PC-9 (cell line): ENCODE measurements at regions of chr1 and their contacts with region 1.

Region 1: GRCh38 chr1:163071405-163072255 is 2.5 kb downstream of the RGS4 start:
- DNase-seq: peak; percentile 35 to 60
- H3K4me3 ChIP-seq: no peak overlapping the region
- H3K27ac ChIP-seq: no peak overlapping the region
- H3K4me1 ChIP-seq: no peaks in the 10 kb centered on the region
- H3K27me3 ChIP-seq: no peaks in the 10 kb centered on the region
- CTCF ChIP-seq: peak; percentile 74

Region 2: GRCh38 chr1:162847839-162848453 is 223.7 kb before region 1 on chr1:
- CTCF ChIA-PET with region 1: no interaction called
- POLR2A ChIA-PET with region 1: no interaction called
- intact Hi-C with region 1: loop called (anchors 5 kb)
- DNase-seq: peak; percentile 45 to 63
- H3K4me3 ChIP-seq: no peak overlapping the region
- H3K27ac ChIP-seq: no peak overlapping the region
- H3K4me1 ChIP-seq: no peaks in the 10 kb centered on the region
- H3K27me3 ChIP-seq: no peaks in the 10 kb centered on the region
- CTCF ChIP-seq: peak; percentile 96

Region 3: DNA sequence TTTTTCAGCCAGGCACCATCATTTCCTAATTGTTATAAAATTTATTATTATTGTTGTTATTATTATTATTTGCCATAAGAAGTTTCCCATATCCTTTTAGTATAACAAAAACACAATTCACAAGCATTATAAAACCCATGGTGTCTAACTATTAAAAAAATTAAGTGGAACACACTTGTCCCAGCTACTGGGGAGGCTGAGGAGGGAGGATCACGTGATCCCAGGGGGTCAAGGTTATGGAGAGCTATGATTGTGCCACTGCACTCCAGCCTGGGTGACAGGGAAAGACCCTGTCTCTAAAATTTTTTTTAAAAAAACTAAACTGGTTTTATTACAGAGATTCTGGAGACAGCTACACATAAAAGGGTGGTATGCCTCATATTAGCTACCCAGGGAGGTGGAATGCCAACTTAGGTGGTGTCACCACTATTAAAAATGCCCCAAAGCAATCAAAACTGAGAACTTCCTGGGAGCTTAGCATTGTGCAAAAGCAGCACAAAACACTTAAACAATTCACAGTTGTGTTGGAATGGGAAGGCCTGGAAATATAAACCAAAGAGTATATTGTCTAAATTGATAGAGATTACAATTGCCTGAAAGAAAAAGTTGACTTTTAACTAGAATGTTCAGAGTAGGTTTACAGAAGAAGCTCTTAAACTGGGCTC is 11.2 kb before region 1 on chr1:
- CTCF ChIA-PET with region 1: interaction called, 10 read pairs
- POLR2A ChIA-PET with region 1: no interaction called
- intact Hi-C with region 1: no loop called
- DNase-seq: no peak
- H3K4me3 ChIP-seq: no peak overlapping the region
- H3K27ac ChIP-seq: no peak overlapping the region
- H3K4me1 ChIP-seq: 0 out of 2 replicates have a peak, but pooled peaks cover 6% of the 10 kb centered on the region
- H3K27me3 ChIP-seq: no peaks in the 10 kb centered on the region
- CTCF ChIP-seq: no peak

Region 4: DNA sequence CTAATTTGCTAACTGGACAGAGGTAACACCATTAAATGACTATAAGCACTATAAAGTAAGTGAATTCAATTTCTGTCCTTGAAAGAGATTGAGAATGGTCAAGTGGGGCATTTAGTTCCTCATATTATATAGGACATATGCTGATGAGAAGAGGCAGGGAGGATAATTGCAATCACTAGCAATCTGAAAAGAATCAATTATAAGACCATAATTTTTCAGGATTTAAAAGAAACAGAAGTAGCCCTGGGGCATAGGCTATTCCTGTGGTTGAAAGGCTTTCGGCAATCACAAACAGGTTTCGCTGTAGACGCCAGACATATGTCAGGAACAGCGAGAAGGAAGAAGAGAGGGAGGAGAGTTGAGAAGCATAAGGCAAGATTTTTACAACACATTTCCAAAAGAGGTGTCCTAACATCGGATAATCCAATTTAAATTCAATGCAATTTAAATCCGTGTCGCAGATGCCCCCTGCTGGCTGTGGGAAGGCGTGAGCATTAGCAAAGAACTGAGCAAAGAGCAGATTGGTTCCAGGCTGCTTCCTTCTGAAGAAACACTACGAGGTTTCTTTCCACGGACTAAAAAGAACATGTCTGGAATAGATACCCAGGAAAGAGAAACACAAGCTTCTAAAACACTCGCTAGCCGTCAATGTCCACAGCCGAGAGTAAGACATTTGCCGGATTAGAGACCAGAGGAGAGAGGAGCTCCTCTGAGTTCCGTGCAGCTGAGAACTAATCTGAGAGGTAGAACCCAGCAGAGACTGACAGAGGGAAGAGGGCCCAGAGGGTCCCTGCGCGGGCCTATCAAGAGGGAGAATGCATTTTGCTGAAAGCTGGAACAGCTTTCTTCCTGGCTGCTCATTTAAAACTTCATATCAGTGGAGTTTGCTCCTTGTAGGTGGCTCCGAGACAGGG is 103.2 kb after region 1 on chr1:
- CTCF ChIA-PET with region 1: no interaction called
- POLR2A ChIA-PET with region 1: no interaction called
- intact Hi-C with region 1: loop called (anchors 2 kb)
- DNase-seq: peak; percentile 32 to 40
- H3K4me3 ChIP-seq: peak overlapping the region; percentile 34; the same call in 1 of the 2 replicates
- H3K27ac ChIP-seq: no peak overlapping the region
- H3K4me1 ChIP-seq: no peaks in the 10 kb centered on the region
- H3K27me3 ChIP-seq: no peaks in the 10 kb centered on the region
- CTCF ChIP-seq: peak; percentile 91

Region 5: DNA sequence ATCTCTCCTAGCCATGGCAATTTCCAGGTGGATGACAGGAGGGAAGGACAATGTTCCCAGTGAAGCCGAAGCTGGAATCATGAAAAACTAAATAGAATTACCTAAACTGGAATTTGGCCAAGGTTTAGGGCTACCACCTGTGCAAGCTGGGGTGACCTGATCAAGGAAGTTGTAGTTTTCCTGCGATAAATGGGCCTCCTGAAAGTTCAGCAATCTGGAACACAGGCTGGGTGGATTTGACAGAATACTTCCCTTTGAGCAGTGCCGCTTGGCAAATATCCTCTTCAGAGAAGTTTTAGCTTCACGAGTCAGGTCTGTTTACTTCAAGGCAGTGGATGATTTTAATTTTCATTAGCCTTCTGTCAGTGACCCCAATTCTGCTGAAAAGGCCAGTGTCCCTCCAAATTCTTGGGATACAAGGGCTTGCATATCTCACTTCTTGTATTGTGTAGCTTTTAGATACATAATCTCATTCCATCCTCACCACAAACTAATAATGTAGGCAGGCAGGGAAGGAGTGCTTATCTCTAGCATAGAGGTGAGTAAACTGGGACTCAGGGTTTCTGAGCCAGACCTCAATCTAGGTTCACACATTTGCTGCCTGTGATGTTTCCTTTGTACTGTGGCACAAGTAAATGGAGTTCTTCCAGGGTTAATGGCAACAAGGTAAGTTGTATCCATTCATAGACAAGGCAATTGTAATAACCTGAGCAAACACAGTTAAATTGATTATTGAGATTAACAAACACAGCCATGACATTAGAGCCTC is 599.5 kb after region 1 on chr1:
- CTCF ChIA-PET with region 1: interaction called, 10 read pairs
- POLR2A ChIA-PET with region 1: no interaction called
- intact Hi-C with region 1: no loop called
- DNase-seq: no peak
- H3K4me3 ChIP-seq: no peak overlapping the region
- H3K27ac ChIP-seq: no peak overlapping the region
- H3K4me1 ChIP-seq: no peaks in the 10 kb centered on the region
- H3K27me3 ChIP-seq: no peaks in the 10 kb centered on the region
- CTCF ChIP-seq: no peak